Spleen (tissue), 13 donors: ENCODE measurements at regions of chr4 and their contacts with region 1.

Region 1: DNA sequence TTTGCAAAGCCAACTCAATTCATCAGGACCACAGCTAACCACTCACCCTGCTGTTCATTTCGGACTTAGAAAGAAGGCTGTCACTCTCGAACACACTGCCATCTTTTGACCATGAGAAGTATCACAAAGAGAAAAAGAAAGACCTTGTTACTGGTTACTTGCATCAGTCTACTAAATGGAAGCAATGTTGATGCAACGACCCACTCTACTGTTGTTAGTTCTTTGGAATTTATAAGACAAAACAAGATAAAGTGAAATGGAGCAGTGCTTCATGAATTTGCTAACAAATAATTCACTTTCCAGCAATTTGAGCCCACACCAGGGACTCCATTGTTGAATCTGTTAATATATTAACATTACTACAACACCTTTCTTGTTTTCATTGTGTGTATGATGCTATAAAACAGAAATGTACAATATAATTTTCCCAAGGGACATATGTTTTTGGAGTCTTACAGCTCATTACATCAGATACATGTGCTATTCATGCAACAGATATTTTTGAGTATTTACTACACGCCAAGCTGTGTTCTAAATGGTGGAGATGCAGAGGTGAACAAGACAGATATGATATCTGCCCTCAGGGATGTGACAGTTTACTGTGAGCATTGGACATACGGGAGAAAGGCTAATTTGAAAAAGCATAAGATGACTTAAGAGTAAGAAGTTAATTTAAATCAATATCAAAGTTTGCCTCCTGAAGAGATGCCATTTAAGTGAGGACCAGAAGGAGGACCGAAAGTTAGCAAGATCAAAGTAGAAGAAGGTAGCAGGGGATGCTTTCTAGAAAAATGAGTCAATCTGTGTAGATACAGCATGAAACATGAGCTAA is 87.2 kb downstream of the AREG start:
- DNase-seq: no peak
- H3K4me3 ChIP-seq: no peak overlapping the region
- H3K27ac ChIP-seq: no peak overlapping the region
- H3K4me1 ChIP-seq: no peaks in the 10 kb centered on the region
- H3K27me3 ChIP-seq: peaks cover 0 to 4% (median 0%) of the 10 kb centered on the region in 7 donors
- CTCF ChIP-seq: peak in 5 of 11 experiments; percentile 22 to 46 (median 44)
- POLR2A ChIP-seq: no peak

Region 2: GRCh38 chr4:74376888-74377483 is 155.2 kb before region 1 on chr4:
- intact Hi-C with region 1: loop called (anchors 5 kb)
- DNase-seq: no peak
- H3K4me3 ChIP-seq: no peak overlapping the region
- H3K27ac ChIP-seq: no peak overlapping the region
- H3K4me1 ChIP-seq: no peaks in the 10 kb centered on the region
- H3K27me3 ChIP-seq: peaks cover 0 to 10% (median 0%) of the 10 kb centered on the region in 7 donors
- CTCF ChIP-seq: peak in 7 of 11 experiments; percentile 30 to 58 (median 45)
- POLR2A ChIP-seq: no peak